AG04450 (cell line): ENCODE measurements at regions of chr7 and their contacts with region 1.

Region 1: DNA sequence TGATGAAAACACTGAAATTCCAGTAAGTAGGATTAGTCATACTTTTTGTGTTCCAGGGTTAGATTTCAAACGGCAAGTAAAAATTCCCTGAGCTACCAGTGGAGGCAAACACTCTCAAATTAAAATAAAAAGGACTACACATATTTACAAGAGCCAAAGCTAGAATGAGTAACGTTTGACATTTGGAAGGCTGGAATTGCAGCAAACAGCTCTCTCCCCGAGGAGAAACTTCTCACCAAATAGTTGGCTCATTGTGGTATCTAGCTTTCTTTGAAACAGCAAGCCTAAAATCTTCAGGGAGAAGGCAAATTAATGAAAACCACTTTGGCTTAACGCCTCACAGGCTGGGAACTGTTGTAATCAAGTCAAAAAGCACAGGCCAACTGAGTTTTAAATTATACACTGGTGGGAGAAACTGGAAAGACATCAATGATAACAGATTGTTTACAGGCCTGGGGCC is 288.3 kb downstream of the SNX13 start:
- DNase-seq: peak; percentile 67
- H3K4me3 ChIP-seq: no peak overlapping the region
- H3K27ac ChIP-seq: peak overlapping the region; percentile 73
- H3K27me3 ChIP-seq: no peaks in the 10 kb centered on the region
- CTCF ChIP-seq: peak; percentile 53

Region 2: DNA sequence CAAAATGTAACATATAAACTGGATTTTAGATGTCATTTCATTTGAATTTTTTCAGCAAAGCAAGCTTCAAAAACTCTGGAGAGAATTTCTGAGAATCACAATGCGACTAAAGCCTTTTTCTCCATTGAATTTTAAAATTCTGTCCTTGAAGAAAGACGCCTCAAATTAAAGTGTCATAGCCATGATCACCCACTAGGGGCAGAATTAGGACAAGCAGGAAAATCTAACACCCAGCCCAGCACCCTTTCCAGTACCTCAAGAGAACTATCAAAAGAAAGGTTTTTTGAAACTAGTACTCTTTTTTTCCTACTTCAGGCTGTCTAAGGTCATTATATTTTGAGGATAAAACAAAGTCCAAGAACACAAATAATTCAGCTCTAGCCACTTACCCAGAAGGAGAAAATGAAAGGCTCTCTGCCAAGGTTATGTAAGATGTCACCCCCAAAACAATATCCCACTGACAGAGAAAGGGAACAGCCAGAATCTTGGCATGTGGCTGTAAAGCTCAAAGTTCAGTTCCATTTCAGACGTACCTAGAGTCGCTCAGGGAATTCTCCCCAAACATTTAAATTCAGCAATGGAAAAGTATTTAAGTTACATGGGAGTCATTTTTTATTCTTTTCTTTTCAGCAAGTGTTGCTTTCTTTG is 11.1 kb before region 1 on chr7:
- CTCF ChIA-PET with region 1: interaction called, 18 read pairs
- POLR2A ChIA-PET with region 1: no interaction called
- DNase-seq: no peak
- H3K4me3 ChIP-seq: no peak overlapping the region
- H3K27ac ChIP-seq: no peak overlapping the region
- H3K27me3 ChIP-seq: no peaks in the 10 kb centered on the region
- CTCF ChIP-seq: peak; percentile 63